PC-9 (cell line): ENCODE measurements at regions of chr19 and their contacts with region 1.

Region 1: GRCh38 chr19:8526345-8527067 is 12.5 kb upstream of the ZNF414 start:
- DNase-seq: peak; percentile 81 to 91
- H3K4me3 ChIP-seq: peak overlapping the region; percentile 66
- H3K27ac ChIP-seq: peak overlapping the region; percentile 81
- H3K4me1 ChIP-seq: peaks cover 9% of the 10 kb centered on the region
- H3K27me3 ChIP-seq: no peaks in the 10 kb centered on the region
- CTCF ChIP-seq: no peak

Region 2: GRCh38 chr19:8321060-8321985 is 205.2 kb before region 1 on chr19 and contains the starts of genes NDUFA7 and RPS28:
- CTCF ChIA-PET with region 1: interaction called, 16 read pairs
- POLR2A ChIA-PET with region 1: interaction called, 4 read pairs
- intact Hi-C with region 1: no loop called
- DNase-seq: peak; percentile 88 to 95
- H3K4me3 ChIP-seq: peak within 1 kb of the TSS; percentile 92
- H3K27ac ChIP-seq: peak within 1 kb of the TSS; percentile 55
- H3K4me1 ChIP-seq: peaks cover 20% of the 10 kb centered on the region
- H3K27me3 ChIP-seq: no peaks in the 10 kb centered on the region
- CTCF ChIP-seq: peak; percentile 40; the same call in 1 of the 2 replicates
- total RNA-seq, gene NDUFA7: 49.8 and 61.7 TPM in 2 replicates
- total RNA-seq, gene RPS28: 1,283 and 1,512 TPM in 2 replicates

Region 3: DNA sequence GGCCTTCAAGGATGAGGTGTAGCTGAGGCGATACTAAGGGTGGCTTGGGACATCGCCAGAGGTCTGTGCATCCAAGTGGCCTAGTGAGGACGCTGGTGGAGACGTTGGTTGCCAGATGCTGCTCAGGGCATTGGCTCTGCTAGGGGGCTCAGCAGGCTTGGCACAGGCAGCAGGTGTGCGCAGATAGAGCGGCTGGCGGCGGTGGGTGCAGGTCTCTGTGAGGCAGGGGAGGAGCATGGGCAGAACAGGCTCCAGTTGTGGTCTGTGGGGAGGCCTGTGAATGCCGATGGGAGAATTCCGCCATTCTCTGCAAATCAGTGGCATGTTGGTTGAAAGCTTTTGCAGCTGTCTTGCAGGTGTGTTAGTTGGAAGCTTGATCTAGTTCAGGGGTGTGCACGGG is 45.3 kb before region 1 on chr19:
- CTCF ChIA-PET with region 1: no interaction called
- POLR2A ChIA-PET with region 1: no interaction called
- intact Hi-C with region 1: loop called (anchors 2 kb)
- DNase-seq: no peak
- H3K4me3 ChIP-seq: no peak overlapping the region
- H3K27ac ChIP-seq: no peak overlapping the region
- H3K4me1 ChIP-seq: peaks cover 16% of the 10 kb centered on the region
- H3K27me3 ChIP-seq: no peaks in the 10 kb centered on the region
- CTCF ChIP-seq: no peak

Region 4: DNA sequence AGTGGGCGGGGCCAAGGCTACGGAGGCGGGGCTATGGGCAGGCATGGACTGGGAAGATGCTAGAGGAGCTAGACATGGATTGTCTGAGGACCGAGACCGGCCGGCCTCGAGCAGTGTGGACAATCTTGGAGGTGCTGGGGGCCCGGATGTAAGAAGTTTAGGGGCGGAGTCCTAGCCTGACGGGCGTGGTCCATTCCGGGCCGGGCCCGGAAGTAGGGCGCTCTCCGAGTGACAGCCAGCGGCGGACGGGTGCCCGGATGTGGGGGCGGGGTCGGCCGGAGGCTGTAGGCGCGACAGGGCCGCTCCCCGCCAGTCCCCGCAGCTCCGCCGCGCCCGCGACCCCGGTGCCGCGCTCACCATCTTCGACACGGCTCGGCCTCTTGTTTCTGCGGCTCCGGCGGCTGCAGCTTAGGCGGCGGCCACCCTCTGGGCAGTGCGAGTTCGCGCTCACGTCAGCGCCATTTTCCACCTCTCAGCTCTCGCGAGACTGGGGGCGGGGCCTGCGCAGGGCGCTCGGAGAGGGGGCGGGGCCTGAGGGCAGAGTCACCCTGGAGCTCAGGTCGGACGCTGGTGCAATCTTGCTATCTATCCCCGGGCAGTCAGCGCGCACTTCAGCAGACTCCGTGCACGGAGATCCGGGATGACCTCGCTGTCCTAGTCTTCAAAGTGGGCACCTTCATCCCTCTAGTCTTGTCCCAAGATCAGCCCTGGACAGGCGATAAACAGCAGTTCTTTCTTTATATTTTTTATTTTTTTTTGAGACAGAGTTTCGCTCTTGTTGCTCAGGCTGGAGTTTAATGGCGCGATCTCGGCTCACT is 12.6 kb before region 1 on chr19 and contains the start of gene ZNF414:
- CTCF ChIA-PET with region 1: no interaction called
- POLR2A ChIA-PET with region 1: interaction called, 25 read pairs
- intact Hi-C with region 1: loop called (anchors 1 kb)
- DNase-seq: peak; percentile 93 to 95
- H3K4me3 ChIP-seq: peak within 1 kb of the TSS; percentile 80
- H3K27ac ChIP-seq: peak within 1 kb of the TSS; percentile 76
- H3K4me1 ChIP-seq: peaks cover 14% of the 10 kb centered on the region
- H3K27me3 ChIP-seq: no peaks in the 10 kb centered on the region
- CTCF ChIP-seq: no peak
- total RNA-seq, gene ZNF414: 22.1 and 22.4 TPM in 2 replicates

Region 5: GRCh38 chr19:8569066-8569771 is 42.7 kb after region 1 on chr19:
- CTCF ChIA-PET with region 1: interaction called, 3 read pairs
- POLR2A ChIA-PET with region 1: no interaction called
- intact Hi-C with region 1: loop called (anchors 5 kb)
- DNase-seq: peak; percentile 63 to 95
- H3K4me3 ChIP-seq: no peak overlapping the region
- H3K27ac ChIP-seq: 0 out of 2 replicates have a peak overlapping the region, but pooled peaks have one; percentile 18
- H3K4me1 ChIP-seq: peaks cover 46% of the 10 kb centered on the region
- H3K27me3 ChIP-seq: no peaks in the 10 kb centered on the region
- CTCF ChIP-seq: no peak; the same call in 1 of the 2 replicates

Region 6: GRCh38 chr19:8592231-8593009 is 65.9 kb after region 1 on chr19:
- CTCF ChIA-PET with region 1: no interaction called
- POLR2A ChIA-PET with region 1: no interaction called
- intact Hi-C with region 1: no loop called
- DNase-seq: peak in 1 of 2 experiments; percentile 41
- H3K4me3 ChIP-seq: no peak overlapping the region
- H3K27ac ChIP-seq: no peak overlapping the region
- H3K4me1 ChIP-seq: no peaks in the 10 kb centered on the region
- H3K27me3 ChIP-seq: peaks cover 77% of the 10 kb centered on the region
- CTCF ChIP-seq: no peak